Calu3 (cell line): ENCODE measurements at regions of chr9 and their contacts with region 1.

Region 1: DNA sequence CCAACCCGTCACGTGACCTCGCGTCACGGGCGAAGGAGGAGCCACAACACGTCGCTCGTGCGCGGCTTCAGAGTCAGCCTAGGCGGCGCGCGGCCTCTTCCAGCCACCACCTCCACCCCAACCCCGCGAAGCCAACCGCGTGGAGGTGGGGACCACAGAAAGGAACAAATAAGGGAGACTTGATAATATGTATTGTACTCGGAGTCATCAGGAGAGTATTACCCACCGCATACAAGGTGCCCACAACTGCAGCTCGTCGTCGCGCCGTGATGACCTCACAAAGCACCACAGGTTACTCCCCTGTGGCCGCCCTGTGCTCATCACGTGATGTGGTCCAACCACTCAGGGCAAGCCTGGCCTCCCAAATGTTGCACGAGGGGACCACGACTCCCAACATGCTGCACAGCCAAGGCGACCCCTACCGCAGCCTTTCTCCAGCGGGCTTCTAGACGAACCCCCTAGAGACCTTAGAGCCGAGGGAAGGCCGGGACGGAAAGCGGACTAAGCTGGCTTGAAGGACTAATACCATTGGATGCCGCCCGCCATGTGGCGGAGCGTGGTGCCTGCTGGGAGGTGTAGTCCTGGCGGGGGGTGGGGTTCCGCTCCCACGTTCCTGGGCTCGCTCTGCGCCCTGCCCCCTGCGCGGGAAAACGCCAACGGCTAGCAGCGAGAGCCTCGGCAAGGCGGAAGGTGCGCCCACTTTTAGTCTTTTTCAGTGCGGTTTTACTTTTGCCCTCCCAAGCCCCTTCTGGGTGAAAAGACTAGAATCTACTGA is 423 bp upstream of the UBAP2 start:
- DNase-seq: peak; percentile 93
- H3K4me3 Mint-ChIP-seq: peak overlapping the region; percentile 94
- H3K27ac Mint-ChIP-seq: peak overlapping the region; percentile 99
- H3K4me1 Mint-ChIP-seq: peaks cover 17% of the 10 kb centered on the region
- H3K27me3 Mint-ChIP-seq: no peaks in the 10 kb centered on the region
- CTCF ChIP-seq: no peak

Region 2: DNA sequence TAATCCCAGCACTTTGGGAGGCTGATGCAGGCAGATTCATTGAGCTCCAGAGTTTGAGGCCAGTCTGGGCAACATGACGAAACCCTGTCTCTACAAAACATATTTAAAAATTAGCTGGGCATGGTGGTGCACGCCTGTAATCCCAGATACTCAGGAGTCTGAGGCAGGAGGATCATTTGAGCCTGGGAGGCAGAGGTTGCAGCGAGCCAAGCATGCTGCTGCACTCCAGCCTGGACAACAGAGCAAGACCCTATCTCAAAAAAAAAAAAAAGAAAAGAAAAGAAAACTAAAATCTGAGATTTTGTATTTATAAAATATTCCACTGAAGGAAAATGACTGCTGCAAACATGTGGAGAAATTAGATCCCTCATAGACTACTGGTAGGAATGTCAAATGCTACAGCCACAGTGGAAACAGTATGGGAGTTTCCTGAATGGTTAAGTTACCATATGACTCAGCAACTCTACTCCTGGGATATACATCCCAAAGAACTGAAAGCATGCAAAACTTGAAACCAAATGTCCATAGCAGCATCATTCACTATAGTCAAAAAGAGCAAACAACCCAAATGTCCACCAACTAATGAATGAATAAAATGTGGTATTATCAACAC is 106.5 kb before region 1 on chr9:
- CTCF ChIA-PET with region 1: no interaction called
- intact Hi-C with region 1: loop called (anchors 10 kb)
- DNase-seq: no peak
- H3K4me3 Mint-ChIP-seq: no peak overlapping the region
- H3K27ac Mint-ChIP-seq: no peak overlapping the region
- H3K4me1 Mint-ChIP-seq: peaks cover 42% of the 10 kb centered on the region
- H3K27me3 Mint-ChIP-seq: no peaks in the 10 kb centered on the region
- CTCF ChIP-seq: no peak